Lower lobe of right lung (tissue), 2 donors: ENCODE measurements at regions of chr22 and their contacts with region 1.

Region 1: DNA sequence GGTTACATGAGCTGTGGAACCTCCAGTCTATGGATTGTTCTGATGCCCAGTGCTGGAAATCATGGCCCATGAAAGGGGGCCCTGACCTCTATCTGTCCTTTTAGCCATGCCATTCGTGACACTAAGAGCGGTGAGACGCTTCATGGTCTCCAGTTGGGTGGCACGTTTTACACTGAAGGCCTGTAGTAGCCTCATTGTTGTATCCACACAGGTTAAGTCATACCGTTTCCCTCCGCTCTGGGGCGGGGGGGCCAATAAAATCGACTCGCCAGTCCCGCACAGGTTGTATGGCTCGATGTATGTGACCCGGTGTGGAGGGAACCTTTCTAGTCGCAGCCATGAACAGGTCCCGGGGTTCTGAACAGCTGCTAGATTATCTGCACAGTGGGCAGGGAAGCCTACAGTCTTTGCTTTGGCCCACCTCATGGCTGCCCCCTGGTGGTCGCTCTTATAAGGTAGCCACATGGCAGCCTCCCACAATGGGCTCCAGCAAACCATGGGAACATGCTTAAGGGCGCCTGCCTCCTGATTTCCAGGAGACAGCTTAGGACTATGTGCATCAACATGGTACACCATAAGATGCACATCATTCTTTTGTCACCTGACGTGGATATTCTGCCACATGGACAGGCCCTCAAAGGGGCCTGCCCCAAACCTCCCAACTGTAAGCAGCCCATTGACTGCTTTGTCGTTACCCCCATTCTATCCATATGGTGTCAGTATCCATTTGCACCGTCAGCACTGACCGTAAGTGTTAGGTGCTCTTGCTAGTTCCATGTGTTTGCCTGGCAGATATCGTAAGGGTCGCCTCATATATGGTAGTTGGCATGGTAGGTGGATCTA is 19.7 kb upstream of the APOL3 start:
- DNase-seq: peak; percentile 90
- ATAC-seq: peak; percentile 96
- H3K4me3 ChIP-seq: no peak overlapping the region
- H3K27ac ChIP-seq: no peak overlapping the region
- H3K4me1 ChIP-seq: peaks cover 11% of the 10 kb centered on the region
- H3K27me3 ChIP-seq: no peaks in the 10 kb centered on the region
- CTCF ChIP-seq: peak; percentile 93

Region 2: DNA sequence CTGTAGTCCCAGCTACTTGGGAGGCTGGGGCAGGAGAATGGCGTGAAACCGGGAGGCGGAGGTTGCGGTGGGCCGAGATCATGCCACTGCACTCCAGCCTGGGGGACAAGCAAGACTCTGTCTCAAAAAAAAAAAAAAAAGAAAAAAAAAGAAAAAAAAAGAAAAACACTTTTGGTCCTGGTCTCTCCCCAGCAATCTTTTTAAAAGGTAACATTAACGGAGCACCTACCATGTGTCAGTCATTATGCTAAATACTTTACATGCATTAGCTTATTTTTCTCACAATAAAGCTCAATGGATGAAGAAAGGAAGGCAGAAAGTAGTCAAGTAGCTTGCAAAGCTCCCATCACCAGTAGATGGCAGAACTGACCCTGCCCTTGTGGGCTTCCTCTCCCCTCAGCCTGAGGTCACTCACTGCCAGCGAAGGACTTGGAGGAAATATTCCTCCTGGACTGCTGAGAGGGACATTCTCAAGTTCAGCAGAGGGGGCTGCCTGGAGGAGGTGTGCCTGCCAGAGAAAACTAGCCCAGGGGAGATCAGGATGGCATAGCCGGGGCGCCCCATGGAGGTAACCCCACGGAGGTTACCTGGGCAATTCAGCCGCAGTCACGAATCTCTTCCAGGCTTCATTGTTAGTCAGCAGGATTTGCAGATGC is 35.2 kb before region 1 on chr22:
- intact Hi-C with region 1: loop called (anchors 5 kb)
- DNase-seq: peak; percentile 64
- ATAC-seq: peak; percentile 85 to 90
- H3K4me3 ChIP-seq: no peak overlapping the region
- H3K27ac ChIP-seq: no peak overlapping the region
- H3K4me1 ChIP-seq: peaks cover 36% of the 10 kb centered on the region
- H3K27me3 ChIP-seq: no peaks in the 10 kb centered on the region
- CTCF ChIP-seq: peak; percentile 80